IMR-90 (cell line): ENCODE measurements at regions of chr9 and their contacts with region 1.

Region 1: DNA sequence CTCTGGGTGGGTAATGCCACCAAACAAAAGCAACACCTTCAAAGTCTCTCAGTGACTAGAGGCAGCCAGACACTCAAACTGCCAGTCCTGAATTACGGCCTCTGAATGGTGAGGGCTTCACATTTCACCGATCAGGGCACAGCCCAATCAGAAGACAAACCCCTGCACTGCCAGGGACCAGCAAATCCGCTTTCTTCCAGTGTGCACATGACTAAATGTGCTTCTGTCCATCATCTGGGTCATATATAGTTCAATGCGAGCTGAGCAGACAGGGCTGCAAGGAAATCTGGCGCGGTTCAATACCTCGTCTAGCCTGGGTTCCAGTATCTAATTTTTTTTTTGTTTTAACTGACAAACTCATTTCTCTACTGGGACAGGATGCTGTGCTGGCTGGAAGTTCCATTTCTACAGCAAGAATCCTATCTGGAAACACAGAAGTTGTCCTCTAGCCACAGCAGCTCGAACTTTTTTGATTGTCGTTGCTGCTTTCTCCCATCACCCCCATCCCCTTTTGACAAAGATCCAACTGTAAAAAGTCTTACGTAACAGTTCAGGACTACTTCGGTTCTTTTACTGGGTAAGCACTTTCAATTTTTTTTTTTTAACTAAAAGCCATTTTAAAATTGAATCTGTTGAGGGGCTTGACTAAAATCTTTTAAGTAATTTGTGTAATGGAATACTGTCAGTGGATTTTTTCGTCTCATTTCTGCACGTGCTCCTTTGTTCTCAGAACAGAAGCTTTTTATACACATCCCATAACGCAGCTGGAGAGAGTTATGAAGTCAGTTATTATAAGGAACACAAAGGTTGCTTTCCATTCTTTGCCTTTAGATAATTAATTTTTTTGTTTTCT is 112.7 kb downstream of the NR6A1 start:
- DNase-seq: peak; percentile 97
- ATAC-seq: peak; percentile 86
- H3K4me3 ChIP-seq: peak overlapping the region; percentile 57
- H3K27ac ChIP-seq: peak overlapping the region; percentile 95
- H3K4me1 ChIP-seq: peaks cover 11% of the 10 kb centered on the region
- H3K27me3 ChIP-seq: no peaks in the 10 kb centered on the region
- CTCF ChIP-seq: no peak
- POLR2A ChIP-seq: peak; percentile 99
- RAD21 ChIP-seq: no peak

Region 2: GRCh38 chr9:124511426-124511840 is 147.0 kb before region 1 on chr9:
- CTCF ChIA-PET with region 1: no interaction called
- POLR2A ChIA-PET with region 1: no interaction called
- dilution Hi-C with region 1: no loop called
- in situ Hi-C with region 1: no loop called
- intact Hi-C with region 1: no loop called
- DNase-seq: no peak
- ATAC-seq: no peak
- H3K4me3 ChIP-seq: no peak overlapping the region
- H3K27ac ChIP-seq: no peak overlapping the region
- H3K4me1 ChIP-seq: no peaks in the 10 kb centered on the region; the same call in 1 of the 2 replicates
- H3K27me3 ChIP-seq: peaks cover 46% of the 10 kb centered on the region
- CTCF ChIP-seq: no peak
- POLR2A ChIP-seq: no peak
- RAD21 ChIP-seq: peak; percentile 29

Region 3: DNA sequence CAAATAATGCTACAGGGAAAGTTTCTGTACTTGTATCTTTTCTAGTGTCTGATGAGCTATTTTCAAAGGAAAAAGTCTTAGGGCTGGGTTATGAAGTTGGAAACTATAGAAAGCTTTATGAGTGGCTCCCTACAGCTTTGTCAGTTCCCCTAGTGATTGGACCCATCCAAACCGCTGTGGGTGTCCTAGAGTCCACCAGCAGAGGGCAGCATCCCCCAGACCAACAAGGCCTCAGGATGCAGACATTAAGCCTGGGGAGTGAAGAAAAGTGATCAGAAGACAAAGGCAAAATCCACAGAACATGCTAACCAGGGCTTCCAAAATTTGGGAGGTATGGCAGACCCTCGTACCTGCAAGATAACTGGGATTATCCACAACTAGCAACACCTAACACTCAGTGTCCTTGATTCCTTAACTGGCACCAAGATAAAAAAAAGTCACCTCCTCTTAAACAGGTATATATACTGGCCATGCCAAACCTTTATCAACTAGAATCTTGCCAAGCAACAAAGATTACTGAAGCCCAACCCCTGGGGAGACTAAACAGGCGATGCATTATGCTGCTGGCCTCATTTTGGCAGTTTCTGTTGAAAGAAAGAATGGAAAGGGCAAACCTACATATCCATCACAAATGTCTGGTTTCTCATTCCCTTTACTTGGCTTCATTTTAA is 40.8 kb before region 1 on chr9:
- CTCF ChIA-PET with region 1: interaction called, 6 read pairs
- POLR2A ChIA-PET with region 1: interaction called, 12 read pairs
- dilution Hi-C with region 1: no loop called
- in situ Hi-C with region 1: no loop called
- intact Hi-C with region 1: loop called (anchors 2 kb)
- DNase-seq: peak; percentile 79
- ATAC-seq: peak; percentile 98
- H3K4me3 ChIP-seq: no peak overlapping the region
- H3K27ac ChIP-seq: no peak overlapping the region
- H3K4me1 ChIP-seq: peaks cover 2% of the 10 kb centered on the region
- H3K27me3 ChIP-seq: peaks cover 7% of the 10 kb centered on the region
- CTCF ChIP-seq: peak; percentile 97
- POLR2A ChIP-seq: peak; percentile 44; the same call in 1 of the 2 replicates
- RAD21 ChIP-seq: peak; percentile 98

Region 4: DNA sequence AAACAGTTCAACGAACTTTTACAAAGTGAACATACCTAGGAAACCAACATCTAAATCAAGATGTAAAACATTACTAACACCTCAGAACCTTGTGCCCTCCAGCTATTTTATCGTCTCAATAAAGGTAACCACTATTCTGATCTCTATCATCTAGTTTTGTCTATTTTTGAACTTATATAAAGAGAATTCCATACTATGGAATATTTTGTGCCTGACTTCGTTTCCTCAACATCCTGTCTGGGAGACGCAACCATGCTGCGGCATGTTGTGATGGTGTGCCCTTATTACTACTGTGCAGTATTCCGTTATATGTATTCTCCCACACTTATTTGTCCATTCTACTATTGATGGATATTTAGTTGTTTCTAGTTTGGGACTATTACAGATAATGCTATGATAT is 13.5 kb after region 1 on chr9:
- CTCF ChIA-PET with region 1: interaction called, 3 read pairs
- POLR2A ChIA-PET with region 1: interaction called, 11 read pairs
- dilution Hi-C with region 1: no loop called
- in situ Hi-C with region 1: no loop called
- intact Hi-C with region 1: no loop called
- DNase-seq: no peak
- ATAC-seq: no peak
- H3K4me3 ChIP-seq: no peak overlapping the region
- H3K27ac ChIP-seq: no peak overlapping the region
- H3K4me1 ChIP-seq: peaks cover 3% of the 10 kb centered on the region; the same call in 1 of the 2 replicates
- H3K27me3 ChIP-seq: no peaks in the 10 kb centered on the region
- CTCF ChIP-seq: no peak
- POLR2A ChIP-seq: no peak
- RAD21 ChIP-seq: no peak

Region 5: DNA sequence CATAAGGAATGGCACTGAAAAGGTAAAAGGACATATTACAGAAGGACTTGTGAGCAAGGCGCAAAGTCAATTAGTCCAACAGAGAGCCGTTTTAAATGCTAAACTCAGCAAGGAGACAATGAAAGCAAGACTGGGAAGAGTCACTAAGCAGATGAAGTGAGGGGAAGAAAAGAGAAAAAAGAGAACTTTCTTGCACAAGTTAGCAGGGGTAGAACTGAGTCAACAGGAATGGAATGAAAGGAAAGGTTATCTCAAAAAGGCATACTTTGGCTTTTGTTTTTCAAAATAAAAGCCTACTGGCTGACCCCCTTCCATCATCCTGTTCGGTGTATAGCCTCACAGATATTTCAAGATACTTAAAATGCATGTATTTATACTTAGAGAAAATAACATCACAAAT is 37.7 kb after region 1 on chr9:
- CTCF ChIA-PET with region 1: interaction called, 3 read pairs
- POLR2A ChIA-PET with region 1: interaction called, 5 read pairs
- dilution Hi-C with region 1: no loop called
- in situ Hi-C with region 1: no loop called
- intact Hi-C with region 1: loop called (anchors 1 kb)
- DNase-seq: peak; percentile 73
- ATAC-seq: peak; percentile 70
- H3K4me3 ChIP-seq: peak overlapping the region; percentile 16; the same call in 1 of the 2 replicates
- H3K27ac ChIP-seq: peak overlapping the region; percentile 32
- H3K4me1 ChIP-seq: peaks cover 25% of the 10 kb centered on the region
- H3K27me3 ChIP-seq: no peaks in the 10 kb centered on the region
- CTCF ChIP-seq: no peak
- POLR2A ChIP-seq: no peak
- RAD21 ChIP-seq: no peak